Lower leg skin (tissue), 4 donors: ENCODE measurements at regions of chr1 and their contacts with region 1.

Region 1: DNA sequence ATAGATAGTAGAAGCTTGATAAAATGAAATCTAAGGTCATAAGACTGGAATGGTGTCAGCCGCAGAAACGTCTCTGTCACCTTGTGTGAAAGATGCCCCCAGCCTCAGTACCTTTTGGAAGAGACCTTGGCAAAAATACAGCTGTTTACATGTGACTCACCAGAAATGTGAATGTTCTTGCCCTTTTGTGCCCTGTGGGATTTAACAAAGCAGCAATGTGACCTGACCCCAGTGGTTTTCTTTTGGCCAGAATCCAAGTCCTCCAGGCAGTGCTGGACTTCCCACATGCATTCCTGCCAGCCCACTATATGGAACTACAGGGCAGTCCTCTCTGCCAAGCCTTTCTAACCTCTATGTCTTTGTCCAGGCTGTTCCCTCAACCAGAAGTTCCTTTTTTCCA is 27.2 kb upstream of the LRRC8C start:
- DNase-seq: no peak
- H3K4me3 ChIP-seq: no peak overlapping the region
- CTCF ChIP-seq: no peak
- POLR2A ChIP-seq: no peak

Region 2: GRCh38 chr1:89381618-89382017 is 224.1 kb before region 1 on chr1:
- intact Hi-C with region 1: no loop called
- DNase-seq: no peak
- H3K4me3 ChIP-seq: no peak overlapping the region
- CTCF ChIP-seq: no peak
- POLR2A ChIP-seq: no peak

Region 3: DNA sequence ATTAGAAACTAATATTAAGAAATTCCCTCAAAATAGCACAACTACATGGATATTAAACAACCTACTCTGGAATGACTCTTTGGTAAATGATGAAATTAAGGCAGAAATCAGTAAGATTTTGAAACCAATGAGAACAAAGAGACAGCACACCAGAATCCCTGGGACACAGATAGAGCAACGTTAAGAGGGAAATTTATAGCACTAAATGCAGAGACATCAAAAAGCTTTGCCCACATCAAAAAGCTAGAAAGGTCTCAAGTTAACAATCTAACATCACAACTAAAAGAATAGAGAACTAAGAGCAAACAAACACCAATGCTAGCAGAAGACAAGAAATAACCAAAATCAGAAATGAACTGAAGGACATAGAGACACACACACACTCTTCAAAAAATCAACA is 129.6 kb before region 1 on chr1:
- intact Hi-C with region 1: loop called (anchors 5 kb)
- DNase-seq: no peak
- H3K4me3 ChIP-seq: no peak overlapping the region
- CTCF ChIP-seq: no peak
- POLR2A ChIP-seq: no peak

Region 4: GRCh38 chr1:89692601-89693521 is 87.2 kb after region 1 on chr1:
- intact Hi-C with region 1: no loop called
- DNase-seq: no peak
- H3K4me3 ChIP-seq: no peak overlapping the region
- CTCF ChIP-seq: no peak
- POLR2A ChIP-seq: no peak